Left cardiac atrium (tissue), 4 donors: ENCODE measurements at regions of chr16 and their contacts with region 1.

Region 1: GRCh38 chr16:69123910-69124309 is 8.5 kb downstream of the CHTF8 start:
- DNase-seq: peak; percentile 64
- ATAC-seq: peak in 1 of 2 donors; percentile 30

Region 2: GRCh38 chr16:68843482-68844210 is 280.3 kb before region 1 on chr16 and contains the start of gene TANGO6:
- intact Hi-C with region 1: loop called in 1 of 2 experiments (anchors 1 kb)
- DNase-seq: peak; percentile 90
- ATAC-seq: peak; percentile 99
- total RNA-seq, gene TANGO6: 9.5 to 12.4 TPM

Region 3: DNA sequence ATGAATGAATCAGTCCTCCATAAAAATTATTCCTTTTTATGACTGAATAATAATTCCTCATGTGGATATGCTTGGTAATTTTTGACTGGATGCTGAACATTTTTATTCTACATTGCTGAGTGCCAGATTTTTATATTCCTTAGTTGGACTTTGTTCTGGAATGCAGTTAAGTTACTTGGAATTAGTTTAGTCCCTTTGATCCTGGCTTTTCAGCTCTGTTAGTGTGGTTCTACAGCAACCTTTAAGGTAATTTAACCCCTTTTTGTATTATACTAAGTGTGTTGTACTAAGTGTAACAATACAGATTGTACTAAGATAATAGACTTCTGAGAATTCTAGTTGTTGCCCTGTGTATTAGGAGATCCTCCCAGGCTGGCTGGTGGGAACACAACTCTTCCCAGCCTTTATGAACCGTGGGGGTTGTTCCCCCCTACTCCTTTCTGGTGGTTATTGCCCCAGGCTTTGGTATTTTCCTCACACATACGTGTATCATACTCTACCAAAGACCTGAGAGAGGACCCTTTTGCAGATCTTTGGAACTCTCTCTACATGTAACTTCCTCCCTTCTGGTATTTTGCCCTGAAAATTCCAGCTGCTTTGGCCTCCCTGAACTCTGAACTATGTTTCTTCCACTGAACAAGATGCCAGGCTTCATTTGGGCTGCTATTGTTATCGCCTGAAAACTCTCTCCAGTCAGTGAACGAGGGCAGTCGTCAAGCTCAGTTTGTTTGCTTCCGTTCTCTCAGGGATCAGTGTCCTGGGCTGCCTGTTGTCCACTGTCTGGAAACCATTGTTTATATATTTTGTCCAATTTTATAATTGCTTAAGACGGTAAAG is 250.1 kb before region 1 on chr16:
- intact Hi-C with region 1: no loop called
- DNase-seq: no peak
- ATAC-seq: no peak

Region 4: GRCh38 chr16:68902008-68902968 is 221.6 kb before region 1 on chr16:
- intact Hi-C with region 1: loop called in 1 of 2 experiments (anchors 2 kb)
- DNase-seq: no peak
- ATAC-seq: peak in 1 of 2 donors; percentile 55

Region 5: DNA sequence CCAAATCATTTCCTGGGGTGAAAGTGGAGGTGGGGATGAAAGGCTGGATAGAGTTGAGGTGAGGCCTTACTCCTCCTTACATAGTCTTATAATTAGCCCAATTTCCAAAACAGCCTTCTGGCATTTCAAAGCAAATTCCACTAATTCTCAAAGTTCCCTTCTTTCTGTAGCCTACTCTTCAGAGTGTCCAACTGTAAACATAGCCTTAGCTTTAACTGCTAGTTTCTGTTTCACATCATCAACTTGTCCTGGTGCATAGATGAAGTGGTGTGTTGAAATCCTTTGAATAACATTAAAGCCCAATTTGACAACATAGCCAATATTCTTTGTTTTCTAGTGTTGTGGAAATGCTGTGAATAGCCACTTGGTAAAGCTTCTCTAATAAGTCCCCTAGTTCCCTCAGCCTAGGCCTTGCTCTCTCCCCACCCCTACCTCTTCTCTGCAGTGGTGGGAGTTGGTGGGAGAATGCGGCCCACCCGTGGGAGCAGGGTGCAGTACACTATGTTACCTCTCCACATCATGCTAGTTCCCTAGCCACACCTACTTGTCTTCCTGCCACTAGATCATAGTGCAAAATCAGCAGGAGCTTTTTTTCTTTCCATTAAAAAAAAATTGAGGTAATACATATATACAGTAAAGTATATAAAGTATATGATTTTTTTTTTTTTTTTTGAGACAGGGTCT is 145.5 kb before region 1 on chr16:
- intact Hi-C with region 1: no loop called
- DNase-seq: no peak
- ATAC-seq: no peak

Region 6: DNA sequence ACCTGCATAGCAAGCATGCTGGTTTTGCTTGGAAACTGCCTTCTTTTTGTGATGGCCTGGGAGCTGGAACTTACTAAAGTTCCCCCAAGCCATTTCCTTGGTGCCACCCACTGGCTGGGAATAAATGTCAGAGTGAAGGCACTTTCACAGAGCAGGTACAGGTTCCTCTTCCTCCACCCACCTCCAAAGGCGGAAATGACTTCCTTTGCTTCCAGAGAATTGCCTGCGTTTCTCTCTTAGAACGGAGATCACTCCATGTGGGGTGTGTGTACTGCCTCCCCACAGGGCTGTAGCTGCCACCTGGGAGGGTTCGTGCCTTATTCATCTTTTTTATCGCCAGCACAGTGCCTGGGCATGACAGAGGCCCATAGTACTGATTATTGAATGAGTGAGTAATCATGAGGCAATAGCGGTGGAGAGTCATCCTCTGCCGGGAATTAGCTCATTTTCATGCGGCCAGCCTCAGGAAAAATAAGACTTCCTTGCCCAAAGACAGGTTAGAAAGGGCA is 50.7 kb before region 1 on chr16:
- intact Hi-C with region 1: no loop called
- DNase-seq: no peak
- ATAC-seq: no peak